Dendritic cell treated with granulocyte-macrophage colony-stimulating factor and Interleukin-4, amounts not matched to agents 40 ng/mL and 50 ng/mL, for 4 days (primary cell): ENCODE measurements at regions of chr1 and their contacts with region 1.

Region 1: DNA sequence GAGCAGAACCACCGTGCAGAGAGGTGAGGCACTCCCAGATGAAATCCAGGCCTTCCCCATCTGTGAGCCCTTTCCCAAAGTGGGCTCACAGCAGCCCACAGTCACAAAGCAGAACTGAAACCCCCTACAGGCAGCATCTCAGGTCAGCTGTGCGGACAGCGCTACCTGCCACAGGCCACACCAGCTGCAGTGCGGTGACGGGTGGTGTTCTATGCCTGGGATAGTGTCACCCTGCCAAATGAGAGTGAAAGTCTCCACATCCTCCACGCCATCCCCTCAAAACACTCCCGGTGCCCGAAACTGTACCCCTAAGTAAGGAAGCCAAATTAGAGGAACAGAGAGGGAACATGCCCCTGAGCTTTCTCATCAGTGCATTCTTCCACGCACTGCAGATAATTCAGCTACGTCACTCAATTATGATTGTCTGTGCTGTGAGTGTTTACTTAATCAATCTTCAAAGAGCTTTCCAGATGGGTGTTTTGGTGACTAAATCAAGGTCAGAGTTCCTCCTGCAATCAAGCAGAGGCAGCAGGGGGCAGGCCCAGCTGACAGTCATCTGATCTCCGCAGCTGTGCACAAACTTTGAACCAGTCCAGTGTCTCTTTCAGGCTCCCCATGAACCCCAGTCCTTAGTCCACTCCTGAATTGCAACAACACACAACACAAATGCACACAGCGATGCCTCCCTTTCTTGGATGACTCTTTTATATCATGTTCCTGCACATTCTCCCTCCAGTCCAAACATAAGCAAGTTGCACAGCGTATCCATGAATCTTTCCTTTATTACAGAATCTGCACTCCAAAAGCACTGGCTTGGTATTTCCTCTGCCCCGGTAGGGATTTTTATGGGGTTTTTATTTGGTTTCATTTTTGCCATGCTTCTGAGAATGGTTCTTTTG is 150.0 kb downstream of the TOMM20 start:
- H3K4me3 Mint-ChIP-seq: peak overlapping the region; percentile 87
- H3K27ac Mint-ChIP-seq: peak overlapping the region; percentile 98
- H3K4me1 Mint-ChIP-seq: peaks cover 89% of the 10 kb centered on the region
- H3K27me3 Mint-ChIP-seq: no peaks in the 10 kb centered on the region

Region 2: GRCh38 chr1:234499119-234499942 is 479.3 kb before region 1 on chr1:
- intact Hi-C with region 1: loop called (anchors 5 kb)
- H3K4me3 Mint-ChIP-seq: peak overlapping the region; percentile 60
- H3K27ac Mint-ChIP-seq: peak overlapping the region; percentile 91
- H3K4me1 Mint-ChIP-seq: peaks cover 49% of the 10 kb centered on the region
- H3K27me3 Mint-ChIP-seq: no peaks in the 10 kb centered on the region

Region 3: DNA sequence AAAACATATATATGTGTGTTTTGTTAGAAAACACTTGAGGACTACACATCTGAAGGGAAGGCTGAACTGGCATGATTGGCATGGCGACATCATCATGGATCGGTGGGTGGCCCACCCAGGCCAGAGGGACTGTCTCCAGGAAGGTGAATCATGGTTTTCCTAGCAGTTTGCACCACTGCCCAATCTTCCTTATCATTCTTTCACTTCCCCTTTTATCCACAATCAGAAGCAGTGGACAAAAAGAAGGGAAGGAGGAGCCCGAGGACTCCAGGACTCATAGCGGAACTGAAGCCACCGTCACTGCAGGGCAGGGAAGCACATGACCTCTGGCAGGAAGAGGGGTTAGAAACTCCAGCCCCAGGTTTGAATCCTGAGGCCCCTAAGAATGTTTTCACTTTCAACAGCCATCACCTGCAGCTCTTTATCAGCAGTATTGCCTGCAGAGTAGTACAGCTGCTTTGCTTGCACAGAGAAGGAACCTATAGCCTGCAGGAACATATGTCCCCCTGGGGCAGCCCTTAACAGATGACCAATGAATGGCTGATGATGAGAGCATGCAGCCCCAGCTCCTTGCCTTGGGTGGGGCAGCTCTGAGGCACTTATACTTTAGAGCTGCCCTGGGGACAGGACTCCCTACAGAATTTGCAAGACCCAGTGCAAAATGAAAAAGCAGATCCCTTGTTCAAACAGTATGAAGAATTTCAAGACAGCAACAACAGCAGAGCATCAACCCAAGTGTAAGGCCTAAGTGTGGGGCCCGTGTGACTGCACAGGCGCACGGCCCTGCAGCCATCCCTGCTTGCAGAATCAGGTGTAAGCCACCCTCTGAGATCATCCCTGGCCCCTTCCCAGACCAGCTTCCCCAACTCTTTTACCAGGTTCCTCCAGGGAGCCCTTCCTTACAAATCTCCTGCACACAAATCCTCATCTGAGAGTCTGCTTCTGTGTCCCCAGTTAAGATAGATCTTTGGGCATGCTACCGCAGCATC is 126.9 kb before region 1 on chr1:
- intact Hi-C with region 1: loop called (anchors 2 kb)
- H3K4me3 Mint-ChIP-seq: peak overlapping the region; percentile 9
- H3K27ac Mint-ChIP-seq: peak overlapping the region; percentile 96
- H3K4me1 Mint-ChIP-seq: peaks cover 91% of the 10 kb centered on the region
- H3K27me3 Mint-ChIP-seq: no peaks in the 10 kb centered on the region

Region 4: DNA sequence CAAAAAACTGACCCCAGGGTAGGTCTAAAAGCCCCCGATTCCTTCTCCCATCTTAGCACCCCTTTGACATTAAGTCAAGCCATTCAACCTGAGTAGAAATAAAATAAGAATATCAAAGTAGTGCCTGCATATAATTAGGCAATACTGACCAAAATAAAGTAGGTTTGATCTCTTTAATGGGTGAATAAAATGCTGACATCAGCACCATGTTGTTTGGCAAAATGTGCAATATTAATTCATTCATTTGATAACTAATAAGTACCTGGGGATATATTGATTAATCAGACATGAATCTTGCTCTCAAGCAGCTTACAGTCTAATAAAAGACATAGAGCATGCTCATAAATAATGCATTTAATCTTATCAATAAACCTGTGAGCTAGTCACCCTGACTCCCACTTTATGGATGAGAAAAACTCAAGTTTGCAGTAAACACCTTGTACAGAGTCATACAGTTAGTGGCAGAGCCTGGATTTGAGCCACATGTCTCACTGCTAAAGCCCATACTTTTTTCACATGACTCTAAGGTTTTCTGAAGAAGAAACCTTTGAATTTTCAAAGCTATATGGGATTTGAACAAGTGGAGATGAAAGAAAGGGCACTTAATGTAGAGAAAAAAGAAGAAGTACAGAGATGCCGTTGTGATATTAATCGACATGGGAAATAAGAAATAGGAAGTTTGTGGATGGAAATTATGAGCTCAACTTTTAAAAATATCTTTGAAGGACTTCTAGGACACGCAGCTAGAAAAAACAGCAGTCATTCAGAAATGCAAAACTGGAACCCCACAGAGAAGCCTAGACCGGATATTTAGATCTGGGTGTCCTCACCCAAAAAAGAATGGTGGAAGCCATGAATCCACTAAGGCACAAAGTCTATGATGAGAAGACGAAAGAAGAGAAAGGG is 34.0 kb before region 1 on chr1:
- intact Hi-C with region 1: loop called (anchors 5 kb)
- H3K4me3 Mint-ChIP-seq: peak overlapping the region; percentile 61
- H3K27ac Mint-ChIP-seq: no peak overlapping the region
- H3K4me1 Mint-ChIP-seq: peaks cover 42% of the 10 kb centered on the region
- H3K27me3 Mint-ChIP-seq: no peaks in the 10 kb centered on the region

Region 5: GRCh38 chr1:235011599-235012435 is 33.2 kb after region 1 on chr1:
- intact Hi-C with region 1: loop called (anchors 2 kb)
- H3K4me3 Mint-ChIP-seq: peak overlapping the region; percentile 9
- H3K27ac Mint-ChIP-seq: peak overlapping the region; percentile 92
- H3K4me1 Mint-ChIP-seq: peaks cover 70% of the 10 kb centered on the region
- H3K27me3 Mint-ChIP-seq: no peaks in the 10 kb centered on the region